Dendritic cell treated with granulocyte-macrophage colony-stimulating factor and Interleukin-4, amounts not matched to agents 40 ng/mL and 50 ng/mL, for 4 days (primary cell): ENCODE measurements at regions of chr1 and their contacts with region 1.

Region 1: GRCh38 chr1:67535474-67535873 is 105.3 kb upstream of the SERBP1 start:
- H3K4me3 Mint-ChIP-seq: no peak overlapping the region
- H3K27ac Mint-ChIP-seq: no peak overlapping the region
- H3K4me1 Mint-ChIP-seq: no peaks in the 10 kb centered on the region
- H3K27me3 Mint-ChIP-seq: no peaks in the 10 kb centered on the region

Region 2: DNA sequence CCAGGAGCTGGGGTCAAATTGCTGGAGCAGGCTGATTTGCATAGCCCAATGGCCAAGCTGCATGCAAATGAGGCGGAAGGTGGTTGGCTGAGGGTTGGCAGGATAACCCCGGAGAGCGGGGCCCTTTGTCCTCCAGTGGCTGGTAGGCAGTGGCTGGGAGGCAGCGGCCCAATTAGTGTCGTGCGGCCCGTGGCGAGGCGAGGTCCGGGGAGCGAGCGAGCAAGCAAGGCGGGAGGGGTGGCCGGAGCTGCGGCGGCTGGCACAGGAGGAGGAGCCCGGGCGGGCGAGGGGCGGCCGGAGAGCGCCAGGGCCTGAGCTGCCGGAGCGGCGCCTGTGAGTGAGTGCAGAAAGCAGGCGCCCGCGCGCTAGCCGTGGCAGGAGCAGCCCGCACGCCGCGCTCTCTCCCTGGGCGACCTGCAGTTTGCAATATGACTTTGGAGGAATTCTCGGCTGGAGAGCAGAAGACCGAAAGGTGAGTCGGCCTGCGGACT is 149.6 kb after region 1 on chr1 and contains the start of gene GADD45A:
- intact Hi-C with region 1: loop called (anchors 10 kb)
- H3K4me3 Mint-ChIP-seq: peak within 1 kb of the TSS; percentile 92
- H3K27ac Mint-ChIP-seq: peak within 1 kb of the TSS; percentile 89
- H3K4me1 Mint-ChIP-seq: peaks cover 50% of the 10 kb centered on the region
- H3K27me3 Mint-ChIP-seq: no peaks in the 10 kb centered on the region